ENCODE measurements at regions of chr10 and their contacts with region 1.

Region 1: GRCh38 chr10:110425684-110426293 is 71.9 kb upstream of the DUSP5 start:
- DNase-seq: peak; percentile 92
- H3K4me3 ChIP-seq: no peak overlapping the region
- H3K27ac ChIP-seq: peak overlapping the region; percentile 99
- H3K27me3 ChIP-seq: no peaks in the 10 kb centered on the region
- CTCF ChIP-seq: no peak

Region 2: GRCh38 chr10:110410329-110411046 is 15.3 kb before region 1 on chr10:
- CTCF ChIA-PET with region 1: interaction called, 5 read pairs
- POLR2A ChIA-PET with region 1: interaction called, 16 read pairs
- DNase-seq: peak; percentile 93
- H3K4me3 ChIP-seq: no peak overlapping the region
- H3K27ac ChIP-seq: peak overlapping the region; percentile 97
- H3K27me3 ChIP-seq: no peaks in the 10 kb centered on the region
- CTCF ChIP-seq: no peak

Measured in AG04450 (cell line).